Naive thymus-derived CD8-positive, alpha-beta T cell (primary cell): ENCODE measurements at regions of chr3 and their contacts with region 1.

Region 1: GRCh38 chr3:188358787-188359493 is 205.0 kb downstream of the LPP start:
- DNase-seq: peak in 6 of 10 donors; percentile 12 to 64 (median 46)
- ATAC-seq: peak; percentile 84 to 88
- H3K4me3 Mint-ChIP-seq: peak overlapping the region; percentile 58 to 82 (median 75)
- H3K27ac Mint-ChIP-seq: peak overlapping the region; percentile 80 to 97 (median 88)
- H3K4me1 Mint-ChIP-seq: peaks cover 29 to 58% (median 47%) of the 10 kb centered on the region in 4 donors
- H3K27me3 Mint-ChIP-seq: no peaks in the 10 kb centered on the region

Region 2: DNA sequence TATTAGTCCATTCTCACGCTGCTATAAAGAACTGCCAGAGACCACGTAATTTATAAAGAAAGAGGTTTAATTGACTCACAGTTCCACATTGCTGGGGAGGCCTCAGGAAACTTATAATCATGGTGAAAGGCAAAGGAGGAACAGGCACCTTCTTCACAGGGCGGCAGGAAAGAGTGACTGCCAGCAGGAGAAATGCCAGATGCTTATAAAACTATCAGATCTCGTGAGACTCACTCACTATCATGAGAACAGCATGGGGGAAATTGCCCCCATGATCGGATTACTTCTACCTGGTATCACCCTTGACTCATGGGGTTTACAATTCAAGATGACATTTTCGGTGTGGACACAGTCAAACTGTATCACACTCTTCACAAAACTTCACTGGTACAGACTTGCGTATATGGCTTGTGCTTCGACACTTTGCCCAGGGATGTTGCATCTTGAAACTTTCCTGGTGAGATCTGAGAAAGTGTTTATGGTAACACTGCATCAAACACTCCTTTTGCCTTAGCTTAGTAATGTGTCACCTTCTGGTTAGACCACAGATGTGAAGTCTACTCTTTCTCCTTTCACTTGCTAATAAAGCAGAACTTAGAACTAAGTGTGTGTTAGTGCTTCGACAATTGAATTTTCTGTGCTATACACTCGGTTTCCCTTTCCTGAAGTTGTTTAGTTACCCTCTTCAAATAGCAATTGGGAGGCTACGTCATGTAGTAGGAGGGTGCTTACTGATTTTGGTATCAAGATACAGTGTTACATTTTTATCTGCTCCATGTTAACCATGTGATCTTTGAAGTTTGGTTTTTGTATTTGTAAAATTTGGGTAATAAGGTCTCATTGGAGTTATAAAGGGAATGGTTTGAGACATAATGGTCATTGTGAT is 19.3 kb before region 1 on chr3:
- POLR2A ChIA-PET with region 1: no interaction called
- DNase-seq: peak in 3 of 10 donors; percentile 21 to 38 (median 25)
- ATAC-seq: peak; percentile 60 to 80
- H3K4me3 Mint-ChIP-seq: peak overlapping the region in 9 of 10 donors; percentile 1 to 65 (median 38)
- H3K27ac Mint-ChIP-seq: peak overlapping the region in 8 of 10 donors; percentile 8 to 85 (median 58)
- H3K4me1 Mint-ChIP-seq: peaks cover 12 to 42% (median 22%) of the 10 kb centered on the region in 4 donors
- H3K27me3 Mint-ChIP-seq: no peaks in the 10 kb centered on the region

Region 3: DNA sequence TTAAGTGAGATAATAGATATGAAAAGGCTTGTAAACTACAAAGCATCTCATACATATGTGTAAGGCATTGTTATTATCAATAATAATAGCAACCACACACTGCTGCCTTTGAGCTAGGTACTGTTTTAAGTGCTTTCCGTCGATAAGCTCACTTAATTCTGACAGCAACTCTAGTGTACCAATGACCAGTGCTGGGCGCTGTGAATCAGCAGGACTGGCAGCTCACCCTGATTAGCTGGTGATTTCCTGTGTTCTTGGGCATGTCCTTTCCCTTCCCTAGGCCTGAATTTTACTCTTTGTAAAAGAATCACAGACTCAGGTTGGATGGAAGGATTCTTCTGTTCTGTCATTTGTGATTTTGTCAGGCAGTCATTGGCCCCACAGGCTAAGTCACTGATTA is 10.6 kb after region 1 on chr3:
- POLR2A ChIA-PET with region 1: interaction called, 14 read pairs
- DNase-seq: no peak
- ATAC-seq: no peak
- H3K4me3 Mint-ChIP-seq: no peak overlapping the region
- H3K27ac Mint-ChIP-seq: no peak overlapping the region
- H3K4me1 Mint-ChIP-seq: peaks cover 6 to 40% (median 13%) of the 10 kb centered on the region in 4 donors
- H3K27me3 Mint-ChIP-seq: no peaks in the 10 kb centered on the region